Activated CD4-positive, alpha-beta T cell treated with anti-CD3 and anti-CD28 coated beads, Interleukin-2, amount 10 ng/mL, durations not matched to agents 24 days and 14 days (primary cell): ENCODE measurements at regions of chr11 and their contacts with region 1.

Region 1: DNA sequence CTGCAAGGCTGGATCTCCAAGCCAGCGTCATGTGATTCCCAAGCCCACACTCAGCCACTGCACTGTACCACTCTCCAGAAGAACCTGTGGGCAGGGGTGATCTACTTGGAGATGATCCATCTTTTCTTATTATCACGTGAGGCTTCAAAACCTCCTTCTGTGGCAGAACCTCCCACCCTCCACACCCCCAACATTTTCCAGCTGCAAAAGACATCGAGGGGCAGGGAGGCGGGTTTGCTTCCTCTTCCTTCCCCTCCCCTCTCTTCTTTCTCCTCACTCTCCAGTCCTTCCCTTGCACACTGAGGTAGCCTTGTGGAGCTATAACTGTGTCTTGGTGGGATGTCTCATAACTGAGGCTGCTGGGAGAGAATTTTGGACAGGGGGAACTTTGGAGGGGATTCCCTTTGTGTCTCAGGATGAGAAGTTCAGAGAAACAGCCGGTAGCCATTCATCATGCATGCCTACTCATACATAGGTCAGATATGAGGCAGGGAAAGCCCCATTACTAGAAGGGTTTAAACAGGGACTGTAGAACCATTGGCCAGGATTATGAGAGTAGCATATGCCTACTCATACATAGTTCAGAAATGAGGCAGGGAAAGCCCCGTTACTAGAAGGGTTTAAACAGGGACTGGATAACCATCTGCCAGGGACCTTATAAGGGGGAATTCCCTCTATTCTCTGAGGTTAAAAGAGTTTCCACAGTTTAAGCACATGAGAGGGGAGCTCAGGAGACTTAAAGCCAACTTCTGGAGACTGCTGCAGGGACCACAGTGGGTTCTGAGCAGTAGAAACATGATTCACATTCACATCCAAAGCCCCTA is 420.7 kb upstream of the CADM1 start:
- DNase-seq: peak; percentile 63
- H3K4me3 Mint-ChIP-seq: peak overlapping the region; percentile 26
- H3K27ac Mint-ChIP-seq: peak overlapping the region; percentile 76
- H3K4me1 Mint-ChIP-seq: peaks cover 9% of the 10 kb centered on the region
- H3K27me3 Mint-ChIP-seq: peaks cover 2% of the 10 kb centered on the region

Region 2: GRCh38 chr11:115645625-115646317 is 279.2 kb before region 1 on chr11:
- intact Hi-C with region 1: no loop called
- DNase-seq: no peak
- H3K4me3 Mint-ChIP-seq: no peak overlapping the region
- H3K27ac Mint-ChIP-seq: no peak overlapping the region
- H3K4me1 Mint-ChIP-seq: no peaks in the 10 kb centered on the region
- H3K27me3 Mint-ChIP-seq: no peaks in the 10 kb centered on the region

Region 3: DNA sequence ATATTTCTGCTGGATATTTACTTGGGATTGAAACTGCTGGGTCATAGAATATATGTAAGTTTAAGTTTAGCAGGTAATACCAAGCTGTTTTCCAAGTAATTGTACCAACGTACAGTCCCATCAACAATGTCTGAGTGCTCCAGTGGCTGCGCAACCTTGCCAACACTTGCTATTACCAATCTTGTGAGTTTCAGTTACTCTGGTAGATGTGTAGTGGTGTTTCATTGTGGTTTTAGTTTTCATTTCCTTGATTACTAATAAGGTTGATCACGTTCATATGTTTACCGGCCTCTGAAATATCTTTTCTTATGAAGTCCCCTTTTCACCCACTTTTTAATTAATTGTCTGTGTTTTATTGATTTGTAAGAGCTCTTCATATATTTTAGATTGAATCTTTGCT is 50.1 kb before region 1 on chr11:
- intact Hi-C with region 1: loop called (anchors 2 kb)
- DNase-seq: no peak
- H3K4me3 Mint-ChIP-seq: no peak overlapping the region
- H3K27ac Mint-ChIP-seq: no peak overlapping the region
- H3K4me1 Mint-ChIP-seq: no peaks in the 10 kb centered on the region
- H3K27me3 Mint-ChIP-seq: no peaks in the 10 kb centered on the region

Region 4: GRCh38 chr11:115893694-115894099 is 31.3 kb before region 1 on chr11:
- intact Hi-C with region 1: no loop called
- DNase-seq: no peak
- H3K4me3 Mint-ChIP-seq: no peak overlapping the region
- H3K27ac Mint-ChIP-seq: no peak overlapping the region
- H3K4me1 Mint-ChIP-seq: no peaks in the 10 kb centered on the region
- H3K27me3 Mint-ChIP-seq: no peaks in the 10 kb centered on the region